Prostate gland (tissue), 2 donors: ENCODE measurements at regions of chr7 and their contacts with region 1.

Region 1: GRCh38 chr7:155815332-155816191 is 3.3 kb upstream of the SHH start:
- DNase-seq: peak; percentile 64
- H3K4me3 ChIP-seq: no peak overlapping the region
- H3K27ac ChIP-seq: no peak overlapping the region
- H3K4me1 ChIP-seq: no peaks in the 10 kb centered on the region
- H3K27me3 ChIP-seq: peaks cover 7% of the 10 kb centered on the region
- CTCF ChIP-seq: peak; percentile 32 to 81 (median 64)
- POLR2A ChIP-seq: no peak

Region 2: DNA sequence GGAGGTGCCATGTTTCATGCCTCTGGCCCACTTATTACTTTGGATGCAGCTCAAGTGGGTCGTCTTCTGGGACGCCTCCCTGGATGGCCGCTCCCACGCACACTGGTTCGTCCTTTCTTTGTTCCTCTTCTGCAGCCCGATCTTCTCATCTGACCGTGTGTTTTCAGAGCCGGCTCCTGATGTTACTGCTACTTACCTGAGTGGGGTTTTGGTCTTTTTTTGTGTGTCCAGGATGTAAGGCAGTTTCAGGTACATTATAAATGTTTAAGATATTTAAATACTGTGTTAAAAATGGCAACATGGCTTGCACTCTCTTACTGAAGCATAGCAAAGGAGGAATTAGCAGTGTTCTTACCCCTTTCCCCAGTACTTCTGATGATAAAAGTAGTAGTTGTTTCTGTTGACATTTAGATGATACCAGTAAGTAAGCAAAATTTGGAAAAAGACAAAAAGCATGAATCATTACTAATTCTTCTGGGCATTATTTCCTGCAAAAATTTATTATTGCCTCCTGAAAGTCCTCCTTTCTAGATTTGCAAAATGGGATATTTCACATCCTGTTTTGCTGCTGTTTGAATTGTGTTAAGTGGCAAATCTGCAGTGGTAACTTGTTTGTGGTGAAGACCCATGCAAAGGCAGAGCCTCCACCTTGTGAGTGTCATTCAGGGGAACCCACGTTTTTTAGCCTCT is 62.7 kb before region 1 on chr7:
- intact Hi-C with region 1: no loop called
- DNase-seq: no peak
- H3K4me3 ChIP-seq: no peak overlapping the region
- H3K27ac ChIP-seq: no peak overlapping the region
- H3K4me1 ChIP-seq: no peaks in the 10 kb centered on the region
- H3K27me3 ChIP-seq: no peaks in the 10 kb centered on the region
- CTCF ChIP-seq: no peak
- POLR2A ChIP-seq: no peak

Region 3: DNA sequence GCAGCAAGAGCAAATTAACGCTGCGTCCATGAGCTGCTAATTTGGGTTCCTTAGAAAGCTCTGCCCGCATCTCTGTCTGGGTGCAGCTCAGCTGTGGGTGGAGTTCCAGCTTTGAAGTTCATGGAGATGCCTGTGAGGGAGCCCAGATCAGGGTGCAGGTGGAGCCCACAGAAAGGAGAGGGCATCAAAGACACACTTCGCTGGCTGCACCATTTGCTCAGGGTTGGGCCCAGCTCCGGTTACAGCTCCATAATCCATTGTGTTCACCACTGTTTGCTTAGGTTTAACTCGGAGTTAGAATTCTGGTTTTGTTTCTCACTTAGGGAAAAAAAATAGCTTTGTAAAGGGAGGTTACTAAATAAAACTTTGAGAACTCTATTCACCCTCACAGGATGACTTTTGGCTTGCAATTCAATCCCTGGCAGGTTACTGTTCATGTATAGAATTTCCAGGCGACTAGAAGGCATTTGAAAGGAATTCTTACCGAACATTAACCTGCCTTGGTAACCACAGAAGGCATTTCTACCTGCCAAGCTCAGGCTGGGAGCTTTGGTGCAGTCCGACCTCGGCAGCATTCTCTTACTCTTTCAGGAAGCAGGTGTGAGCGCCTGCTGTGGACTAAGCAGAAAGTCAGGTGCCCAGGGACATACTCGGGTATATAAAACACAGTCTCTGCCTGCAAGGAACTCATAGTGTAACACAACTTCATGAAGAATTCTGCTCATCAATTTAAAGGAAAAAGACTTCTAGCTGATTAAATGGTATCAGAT is 645.5 kb after region 1 on chr7:
- intact Hi-C with region 1: loop called (anchors 10 kb)
- DNase-seq: peak; percentile 51
- H3K4me3 ChIP-seq: no peak overlapping the region
- H3K27ac ChIP-seq: peak overlapping the region in 1 of 2 donors; percentile 67
- H3K4me1 ChIP-seq: peaks cover 19% of the 10 kb centered on the region
- H3K27me3 ChIP-seq: no peaks in the 10 kb centered on the region
- CTCF ChIP-seq: no peak
- POLR2A ChIP-seq: no peak